Activated B cell treated with CpG ODN at 0.5 μM for 24 hours (primary cell): ENCODE measurements at regions of chr3 and their contacts with region 1.

Region 1: GRCh38 chr3:44584646-44585501 is at the start of gene ZNF660:
- DNase-seq: peak; percentile 23
- ATAC-seq: peak; percentile 86
- H3K4me3 Mint-ChIP-seq: peak within 1 kb of the TSS; percentile 87
- H3K27ac Mint-ChIP-seq: peak within 1 kb of the TSS; percentile 15
- H3K4me1 Mint-ChIP-seq: peaks cover 17% of the 10 kb centered on the region
- H3K27me3 Mint-ChIP-seq: peaks cover 6% of the 10 kb centered on the region
- CTCF ChIP-seq: no peak
- total RNA-seq, gene ZNF660: 4.8 and 5.2 TPM in 2 replicates

Region 2: GRCh38 chr3:44554626-44555592 is 30.0 kb before region 1 on chr3 and contains the start of gene ZKSCAN7:
- CTCF ChIA-PET with region 1: no interaction called
- POLR2A ChIA-PET with region 1: interaction called, 5 read pairs
- intact Hi-C with region 1: loop called (anchors 2 kb)
- DNase-seq: peak; percentile 56
- ATAC-seq: peak; percentile 86
- H3K4me3 Mint-ChIP-seq: peak within 1 kb of the TSS; percentile 94
- H3K27ac Mint-ChIP-seq: peak within 1 kb of the TSS; percentile 87
- H3K4me1 Mint-ChIP-seq: peaks cover 20% of the 10 kb centered on the region
- H3K27me3 Mint-ChIP-seq: peaks cover 7% of the 10 kb centered on the region
- CTCF ChIP-seq: no peak
- total RNA-seq, gene ZKSCAN7: 6.8 and 9.2 TPM in 2 replicates